ENCODE measurements at regions of chr6 and their contacts with region 1.

Region 1: GRCh38 chr6:82247634-82248232 is at the start of gene IBTK:
- DNase-seq: peak; percentile 98
- H3K4me3 Mint-ChIP-seq: peak within 1 kb of the TSS; percentile 96
- H3K27ac Mint-ChIP-seq: peak within 1 kb of the TSS; percentile 96
- H3K4me1 Mint-ChIP-seq: peaks cover 24% of the 10 kb centered on the region
- H3K27me3 Mint-ChIP-seq: peaks cover 2% of the 10 kb centered on the region
- total RNA-seq, gene IBTK: 37.2 and 37.7 TPM in 2 replicates

Region 2: DNA sequence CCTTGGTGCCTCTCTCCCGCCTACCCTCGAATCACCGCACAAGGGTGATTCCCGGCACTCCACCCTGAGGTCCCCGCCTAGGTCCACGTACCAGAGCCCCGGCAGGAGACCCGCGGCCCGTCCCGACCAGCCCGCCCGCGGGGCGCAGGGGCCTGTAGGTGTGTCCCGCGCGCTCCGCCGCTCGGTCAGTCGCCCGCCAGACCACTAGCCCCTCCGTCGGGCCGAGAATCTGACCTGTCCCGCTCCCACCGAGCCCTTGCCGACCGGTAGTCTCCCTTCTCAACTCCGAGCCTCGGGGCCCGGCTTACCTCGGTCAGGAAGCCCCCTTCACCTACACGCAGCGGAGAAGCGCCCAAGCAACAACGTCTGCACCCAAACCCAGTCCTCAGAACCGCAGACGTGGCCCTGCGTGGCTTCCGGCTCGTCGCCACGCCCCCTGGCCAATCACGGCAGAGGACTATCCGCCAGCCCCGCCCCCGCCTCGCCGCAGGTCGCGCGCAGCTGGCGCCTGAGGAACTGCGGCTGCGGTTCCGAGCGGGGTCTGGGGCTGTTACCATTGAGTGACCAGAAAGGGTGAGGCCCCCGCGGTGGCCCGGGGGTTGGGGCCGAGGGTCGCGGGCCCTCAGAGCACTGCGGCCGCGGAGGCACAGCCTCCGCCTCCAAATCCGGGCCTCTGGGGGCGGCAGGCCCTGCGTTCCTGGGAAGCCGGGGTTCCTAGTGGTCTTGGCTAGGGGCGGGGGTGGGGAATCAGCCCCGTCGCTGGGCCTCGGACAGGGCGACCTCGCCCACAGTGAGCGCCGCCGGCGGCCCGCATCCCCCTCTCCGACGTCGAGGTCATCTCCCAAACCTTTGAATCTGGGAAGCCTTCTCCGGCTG is 945.4 kb after region 1 on chr6 and contains the starts of genes PGM3 and RWDD2A:
- intact Hi-C with region 1: loop called (anchors 1 kb)
- DNase-seq: peak; percentile 97
- H3K4me3 Mint-ChIP-seq: peak within 1 kb of the TSS; percentile 99
- H3K27ac Mint-ChIP-seq: peak within 1 kb of the TSS; percentile 97
- H3K4me1 Mint-ChIP-seq: peaks cover 26% of the 10 kb centered on the region
- H3K27me3 Mint-ChIP-seq: peaks cover 3% of the 10 kb centered on the region
- total RNA-seq, gene PGM3: 19.7 and 24.7 TPM in 2 replicates
- total RNA-seq, gene RWDD2A: 1.1 and 1.4 TPM in 2 replicates

Region 3: GRCh38 chr6:83215131-83216047 is 967.7 kb after region 1 on chr6:
- intact Hi-C with region 1: loop called (anchors 5 kb)
- DNase-seq: peak; percentile 86
- H3K4me3 Mint-ChIP-seq: no peak overlapping the region
- H3K27ac Mint-ChIP-seq: no peak overlapping the region
- H3K4me1 Mint-ChIP-seq: peaks cover 3% of the 10 kb centered on the region
- H3K27me3 Mint-ChIP-seq: peaks cover 20% of the 10 kb centered on the region

Region 4: DNA sequence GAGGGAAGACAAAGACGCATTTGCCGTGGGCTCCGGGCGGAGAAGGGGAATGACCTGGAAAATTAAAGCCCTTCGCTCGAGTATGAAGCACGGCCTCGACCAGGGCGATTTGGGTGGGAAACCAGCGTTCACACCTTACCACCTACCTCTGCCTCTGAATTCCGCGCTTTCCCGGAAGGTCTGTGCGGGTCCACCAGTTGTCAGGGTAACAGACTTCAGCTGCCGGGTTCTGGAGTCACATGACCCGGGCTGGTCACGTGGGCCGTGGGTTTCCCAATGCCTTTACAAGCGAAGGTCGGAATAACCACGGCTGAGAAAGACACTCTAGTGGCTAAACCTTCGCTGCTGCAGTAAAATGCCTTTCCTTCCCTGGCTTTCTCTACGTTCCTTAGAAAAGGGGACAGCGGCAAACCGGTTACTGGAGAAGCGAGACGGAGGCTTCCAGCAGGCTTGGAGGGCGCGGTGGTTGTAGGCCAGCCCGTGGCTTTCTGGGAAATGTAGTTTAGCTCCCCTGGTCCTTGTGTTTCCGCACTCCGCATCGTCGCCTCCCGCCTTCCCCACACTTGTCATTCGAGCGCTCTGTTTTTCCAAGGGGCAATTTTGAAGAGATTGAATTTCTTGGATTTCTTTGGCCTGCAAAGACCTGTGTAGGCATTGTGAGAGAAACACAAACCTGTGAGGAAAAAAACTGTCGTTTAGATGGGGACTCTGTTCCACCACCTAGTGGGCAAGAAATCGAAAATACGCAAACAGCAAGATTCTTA is 1979.9 kb after region 1 on chr6 and contains the start of gene CEP162:
- intact Hi-C with region 1: loop called (anchors 5 kb)
- DNase-seq: peak; percentile 97
- H3K4me3 Mint-ChIP-seq: peak within 1 kb of the TSS; percentile 98
- H3K27ac Mint-ChIP-seq: peak within 1 kb of the TSS; percentile 89
- H3K4me1 Mint-ChIP-seq: peaks cover 17% of the 10 kb centered on the region
- H3K27me3 Mint-ChIP-seq: peaks cover 13% of the 10 kb centered on the region
- total RNA-seq, gene CEP162: 3.5 and 4.0 TPM in 2 replicates